Heart left ventricle (tissue), 16 donors: ENCODE measurements at regions of chr3 and their contacts with region 1.

Region 1: DNA sequence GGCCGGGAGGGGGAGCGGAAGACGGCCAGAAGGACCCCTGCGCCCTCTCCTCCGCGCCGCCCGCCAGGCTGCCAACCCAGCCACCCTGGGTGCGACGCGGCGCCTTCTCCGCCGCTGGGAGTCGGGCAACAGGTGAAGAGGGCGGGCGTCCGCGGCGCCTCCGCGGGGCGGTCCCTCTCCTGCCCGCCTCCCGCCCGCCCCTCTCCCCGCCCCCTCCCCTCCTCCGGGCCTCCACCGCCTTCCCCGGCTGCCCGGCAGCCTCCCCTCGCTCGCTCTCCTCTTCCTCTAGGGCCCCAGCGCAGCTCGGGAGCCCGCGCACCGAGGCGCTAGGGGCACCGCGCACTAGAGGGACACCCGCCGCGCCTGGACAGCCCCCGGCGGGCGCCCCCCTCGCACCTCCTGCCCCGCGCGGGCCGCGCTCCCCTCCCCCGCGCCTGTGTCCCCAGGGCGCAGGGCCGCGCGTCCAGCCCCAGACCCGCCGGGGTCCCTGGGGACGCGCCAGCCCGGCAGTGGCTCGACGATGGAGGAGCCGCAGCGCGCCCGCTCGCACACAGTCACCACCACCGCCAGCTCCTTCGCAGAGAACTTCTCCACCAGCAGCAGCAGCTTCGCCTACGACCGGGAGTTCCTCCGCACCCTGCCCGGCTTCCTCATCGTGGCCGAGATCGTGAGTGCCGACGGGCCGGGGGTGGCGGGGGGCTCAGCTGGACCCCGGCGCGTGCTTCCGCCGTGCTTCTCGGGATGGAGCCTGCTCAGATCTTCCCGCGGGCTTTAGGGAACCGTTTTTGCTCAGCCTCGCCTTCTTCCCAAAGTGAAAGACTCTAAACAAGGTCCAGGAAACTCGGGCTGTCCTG is at the start of gene CMTM8:
- DNase-seq: peak; percentile 52 to 73 (median 61)
- ATAC-seq: peak; percentile 27 to 87 (median 80)
- H3K4me3 ChIP-seq: peak within 1 kb of the TSS; percentile 50 to 95 (median 72)
- H3K27ac ChIP-seq: peak within 1 kb of the TSS; percentile 53 to 92 (median 83)
- H3K4me1 ChIP-seq: peaks cover 0 to 24% (median 8%) of the 10 kb centered on the region in 12 donors
- H3K27me3 ChIP-seq: peaks cover 0 to 14% (median 0%) of the 10 kb centered on the region in 9 donors
- CTCF ChIP-seq: no peak
- POLR2A ChIP-seq: no peak
- total RNA-seq, gene CMTM8: 1.7 to 12.1 (median 3.5) TPM

Region 2: DNA sequence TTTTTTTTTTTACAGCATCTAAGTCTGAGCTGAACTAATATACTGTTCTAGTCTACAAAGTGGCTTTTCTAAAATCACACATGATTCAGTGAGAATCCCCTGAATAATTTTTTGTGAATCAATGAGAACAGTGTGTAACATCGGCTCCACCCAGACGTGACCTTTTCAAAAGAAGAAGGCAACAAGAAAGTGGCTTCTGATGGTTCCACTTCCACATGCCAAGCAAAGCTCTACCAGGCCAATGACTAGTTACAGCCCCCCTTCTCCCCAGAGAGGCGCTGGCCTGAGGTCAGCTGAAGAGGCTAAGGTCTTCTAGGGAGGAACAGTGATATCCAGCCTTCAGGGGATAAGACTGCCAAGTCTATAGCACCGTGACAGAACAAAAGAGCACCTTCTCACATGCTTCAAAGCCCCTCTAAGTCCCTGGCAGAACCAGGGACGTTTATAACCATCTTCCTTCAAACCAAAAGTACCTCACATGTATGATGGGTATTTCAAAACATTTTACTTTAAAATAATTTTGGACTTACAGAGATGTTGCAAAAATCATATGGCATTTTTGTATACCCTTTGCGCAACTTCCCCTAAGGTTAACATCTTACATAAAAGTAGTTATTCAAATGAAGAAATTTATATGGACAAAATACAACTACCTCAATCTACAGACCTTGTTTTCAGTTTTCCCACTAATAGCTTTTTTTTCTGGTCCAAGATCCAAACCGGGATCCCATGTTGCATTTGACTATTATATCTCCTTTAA is 435.5 kb before region 1 on chr3:
- intact Hi-C with region 1: no loop called
- DNase-seq: no peak
- ATAC-seq: peak in 1 of 4 donors; percentile 39
- H3K4me3 ChIP-seq: no peak overlapping the region
- H3K27ac ChIP-seq: no peak overlapping the region
- H3K4me1 ChIP-seq: no peaks in the 10 kb centered on the region
- H3K27me3 ChIP-seq: no peaks in the 10 kb centered on the region
- CTCF ChIP-seq: no peak
- POLR2A ChIP-seq: no peak

Region 3: GRCh38 chr3:32166654-32167053 is 72.0 kb before region 1 on chr3:
- intact Hi-C with region 1: no loop called
- DNase-seq: no peak
- ATAC-seq: peak in 1 of 4 donors; percentile 20
- H3K4me3 ChIP-seq: no peak overlapping the region
- H3K27ac ChIP-seq: no peak overlapping the region
- H3K4me1 ChIP-seq: no peaks in the 10 kb centered on the region
- H3K27me3 ChIP-seq: no peaks in the 10 kb centered on the region
- CTCF ChIP-seq: no peak
- POLR2A ChIP-seq: no peak

Region 4: DNA sequence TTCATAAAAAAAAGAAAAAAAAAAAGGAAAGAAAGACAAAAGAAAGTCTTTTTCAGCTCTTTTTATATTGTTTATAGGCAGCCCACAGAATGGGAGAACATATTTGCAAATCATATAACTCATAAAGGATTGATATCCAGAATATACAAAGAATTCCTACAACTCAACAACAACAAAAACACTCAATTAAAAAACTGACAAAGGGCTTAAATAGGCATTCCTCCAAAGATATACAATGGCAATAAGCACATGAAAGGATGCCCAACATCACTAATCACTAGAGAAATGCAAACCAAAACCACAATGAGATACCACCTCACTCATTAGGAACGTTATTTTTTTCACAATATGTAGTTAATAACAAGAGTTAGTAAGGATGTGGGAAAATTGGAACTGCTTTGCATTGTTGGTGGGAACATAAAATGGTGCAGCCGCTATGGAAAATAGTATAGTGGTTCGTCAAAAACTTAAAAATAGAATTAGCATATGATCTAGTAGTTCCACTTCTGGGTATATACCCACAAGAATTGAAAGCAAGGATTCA is 54.4 kb before region 1 on chr3:
- intact Hi-C with region 1: loop called in 8 of 10 experiments (anchors 2 to 5 kb)
- DNase-seq: no peak
- ATAC-seq: no peak
- H3K4me3 ChIP-seq: no peak overlapping the region
- H3K27ac ChIP-seq: no peak overlapping the region
- H3K4me1 ChIP-seq: no peaks in the 10 kb centered on the region
- H3K27me3 ChIP-seq: no peaks in the 10 kb centered on the region
- CTCF ChIP-seq: no peak
- POLR2A ChIP-seq: no peak

Region 5: DNA sequence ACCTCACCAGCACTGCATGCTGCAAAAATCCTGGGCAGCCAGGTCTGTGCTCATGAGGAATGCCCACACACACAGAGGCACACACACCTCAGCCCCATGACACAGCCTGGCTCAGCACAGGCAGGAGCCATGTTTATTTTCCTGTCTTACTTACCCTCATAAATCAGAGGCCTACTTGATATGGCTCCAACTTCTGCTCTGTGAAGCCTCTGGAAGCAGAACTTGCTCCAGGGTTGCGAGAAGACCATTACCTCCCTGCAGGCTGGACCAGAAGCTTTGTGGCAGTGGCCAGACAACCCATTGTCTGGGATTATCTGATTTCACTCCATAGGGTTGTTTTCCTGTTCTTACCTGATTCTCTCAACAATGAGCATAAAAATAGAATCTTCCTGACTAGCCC is 44.0 kb before region 1 on chr3:
- intact Hi-C with region 1: loop called in 4 of 10 experiments (anchors 5 kb)
- DNase-seq: peak in 1 of 5 donors; percentile 10
- ATAC-seq: peak in 3 of 4 donors; percentile 29 to 39 (median 33)
- H3K4me3 ChIP-seq: no peak overlapping the region
- H3K27ac ChIP-seq: peak overlapping the region in 7 of 12 donors; percentile 2 to 63 (median 25)
- H3K4me1 ChIP-seq: peaks cover 0 to 19% (median 8%) of the 10 kb centered on the region in 12 donors
- H3K27me3 ChIP-seq: no peaks in the 10 kb centered on the region
- CTCF ChIP-seq: no peak
- POLR2A ChIP-seq: no peak

Region 6: GRCh38 chr3:32200490-32200889 is 38.2 kb before region 1 on chr3:
- intact Hi-C with region 1: loop called in 5 of 10 experiments (anchors 2 to 5 kb)
- DNase-seq: peak; percentile 77 to 86 (median 85)
- ATAC-seq: peak; percentile 81 to 92 (median 88)
- H3K4me3 ChIP-seq: peak overlapping the region in 1 of 12 donors; percentile 6
- H3K27ac ChIP-seq: peak overlapping the region; percentile 47 to 88 (median 76)
- H3K4me1 ChIP-seq: peaks cover 0 to 48% (median 30%) of the 10 kb centered on the region in 12 donors
- H3K27me3 ChIP-seq: no peaks in the 10 kb centered on the region
- CTCF ChIP-seq: no peak
- POLR2A ChIP-seq: no peak

Region 7: DNA sequence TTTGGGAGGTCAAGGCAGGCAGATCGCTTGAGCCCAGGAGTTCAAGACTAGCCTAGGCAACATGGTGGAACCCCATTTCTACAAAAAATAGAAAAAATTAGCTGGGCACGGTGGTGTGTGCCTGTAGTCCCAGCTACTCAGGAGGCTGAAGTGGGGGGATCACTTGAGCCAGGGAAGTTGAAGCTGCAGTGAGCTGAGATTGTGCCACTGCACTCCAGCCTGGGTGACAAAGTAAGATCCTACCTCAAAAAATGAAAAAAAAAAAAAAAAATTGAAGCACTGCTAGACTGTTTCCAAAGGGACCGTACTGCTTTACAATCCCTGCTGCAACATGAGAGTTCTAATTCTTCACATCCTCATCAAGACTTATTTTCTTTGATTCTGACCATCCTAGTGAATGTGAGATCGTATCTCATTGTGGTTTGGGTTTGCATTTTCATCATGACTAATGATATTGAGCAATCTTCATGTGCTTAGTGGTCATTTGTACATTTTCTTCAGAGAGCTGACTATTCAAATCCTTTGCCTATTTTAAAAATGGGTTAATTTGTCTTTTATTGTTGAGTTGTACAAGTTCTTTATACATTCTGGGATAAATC is 10.6 kb after region 1 on chr3:
- intact Hi-C with region 1: no loop called
- DNase-seq: no peak
- ATAC-seq: peak in 1 of 4 donors; percentile 41
- H3K4me3 ChIP-seq: no peak overlapping the region
- H3K27ac ChIP-seq: no peak overlapping the region
- H3K4me1 ChIP-seq: peaks cover 0 to 8% (median 0%) of the 10 kb centered on the region in 12 donors
- H3K27me3 ChIP-seq: no peaks in the 10 kb centered on the region
- CTCF ChIP-seq: no peak
- POLR2A ChIP-seq: no peak

Region 8: DNA sequence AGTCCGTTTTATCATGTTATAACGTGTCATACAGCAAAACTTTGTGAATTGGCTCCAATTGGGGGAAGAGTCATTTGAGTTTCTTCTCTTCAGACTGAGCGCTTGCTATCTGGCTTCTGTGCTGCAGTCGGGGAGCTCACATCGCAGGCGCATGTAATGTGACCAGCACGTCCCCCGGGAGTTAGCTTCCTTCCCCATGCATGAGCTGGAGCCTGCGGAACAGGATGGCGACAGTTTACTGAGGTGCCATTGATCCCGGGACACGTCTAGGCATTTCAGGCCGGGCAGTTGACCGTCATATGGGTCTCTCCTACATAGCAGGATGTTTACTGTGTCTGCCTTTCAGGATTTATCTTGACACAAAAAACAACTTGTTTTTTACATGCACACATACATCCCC is 44.6 kb after region 1 on chr3:
- intact Hi-C with region 1: loop called in 3 of 10 experiments (anchors 5 kb)
- DNase-seq: peak; percentile 65 to 79 (median 78)
- ATAC-seq: peak in 3 of 4 donors; percentile 67 to 90 (median 71)
- H3K4me3 ChIP-seq: no peak overlapping the region
- H3K27ac ChIP-seq: peak overlapping the region in 10 of 12 donors; percentile 0 to 61 (median 32)
- H3K4me1 ChIP-seq: peaks cover 0 to 42% (median 10%) of the 10 kb centered on the region in 12 donors
- H3K27me3 ChIP-seq: no peaks in the 10 kb centered on the region
- CTCF ChIP-seq: no peak
- POLR2A ChIP-seq: no peak